HepG2 (cell line): ENCODE measurements at regions of chr20 and their contacts with region 1.

Region 1: DNA sequence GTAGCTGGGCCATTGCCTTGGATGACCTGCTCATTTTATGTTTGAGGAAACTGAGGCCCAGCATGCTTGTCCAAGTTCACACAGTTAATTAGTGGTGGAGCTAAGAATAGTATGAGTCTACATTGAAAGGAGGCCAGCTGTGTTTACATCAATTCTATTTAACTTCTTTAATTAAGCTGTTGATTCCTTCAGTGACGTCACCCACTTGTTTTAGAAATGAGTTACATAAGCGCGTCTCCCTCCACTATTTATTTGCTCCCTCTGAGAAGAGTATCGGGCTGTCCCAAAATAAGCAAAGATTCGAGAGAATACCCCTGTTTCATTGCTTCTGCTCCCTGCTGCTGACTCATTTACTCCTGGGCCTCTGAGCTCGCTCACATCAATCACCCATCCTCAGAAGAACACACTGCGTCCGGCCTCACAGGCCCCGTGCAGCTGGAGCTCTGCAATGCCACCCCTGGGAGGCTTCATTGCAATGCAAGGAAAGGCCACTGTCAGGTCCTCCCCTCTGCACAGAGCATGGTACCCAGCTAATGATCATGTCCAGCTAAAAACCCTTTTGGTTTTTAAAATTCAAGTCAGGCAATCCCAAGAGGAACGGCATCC is 74.8 kb upstream of the BMP2 start:
- DNase-seq: no peak
- ATAC-seq: peak; percentile 78
- H3K4me3 ChIP-seq: no peak overlapping the region
- H3K27ac ChIP-seq: no peak overlapping the region
- H3K4me1 ChIP-seq: peaks cover 46% of the 10 kb centered on the region
- H3K27me3 ChIP-seq: no peaks in the 10 kb centered on the region
- CTCF ChIP-seq: peak; percentile 35
- EP300 ChIP-seq: no peak
- POLR2A ChIP-seq: no peak
- RAD21 ChIP-seq: no peak

Region 2: DNA sequence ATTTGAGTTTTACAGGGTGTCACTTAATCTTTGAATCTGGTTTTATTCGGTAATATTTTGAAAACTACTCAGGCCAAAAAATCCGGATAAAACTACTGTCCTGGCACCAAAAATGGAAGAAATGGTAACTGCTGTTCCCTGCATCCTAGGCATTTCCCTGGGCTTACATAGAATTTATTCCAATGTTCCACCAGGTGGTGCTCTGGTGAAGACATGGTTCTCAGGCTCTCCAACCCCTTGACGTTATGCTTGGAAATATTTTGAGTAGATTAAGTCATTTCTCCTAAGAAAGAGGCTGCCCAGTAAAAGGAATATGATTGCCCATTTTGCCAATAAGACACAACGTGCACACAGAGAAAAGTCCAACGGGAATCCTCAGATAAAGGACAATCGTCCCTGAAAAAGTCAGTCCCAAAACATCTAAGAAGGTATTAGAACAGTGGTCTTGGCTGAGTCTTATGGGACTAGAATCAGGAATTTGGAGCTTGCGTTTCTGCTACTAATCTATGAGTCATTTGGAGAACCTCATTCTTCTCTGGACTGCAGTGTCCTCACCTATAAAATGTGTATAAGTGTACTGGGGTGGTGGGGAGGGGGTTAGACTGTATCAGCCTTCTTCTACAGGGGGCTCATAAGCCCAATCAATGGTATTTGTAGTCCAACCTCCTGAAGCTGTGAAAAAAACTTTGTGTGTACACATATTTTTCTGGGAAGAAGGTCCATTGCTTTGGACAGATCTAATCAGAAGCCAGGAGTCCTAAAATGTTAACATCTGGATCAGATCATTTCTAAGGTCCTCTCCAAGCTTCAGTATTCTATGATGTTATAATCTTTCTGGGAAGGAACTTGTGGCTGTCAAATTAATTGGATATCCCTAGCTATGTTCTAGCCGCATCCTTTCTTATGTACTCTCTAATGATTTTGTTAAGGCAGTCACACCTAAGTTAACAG is 56.2 kb before region 1 on chr20:
- CTCF ChIA-PET with region 1: no interaction called
- POLR2A ChIA-PET with region 1: no interaction called
- in situ Hi-C with region 1: no loop called
- intact Hi-C with region 1: no loop called
- DNase-seq: peak; percentile 63
- ATAC-seq: peak; percentile 96
- H3K4me3 ChIP-seq: no peak overlapping the region
- H3K27ac ChIP-seq: no peak overlapping the region
- H3K4me1 ChIP-seq: no peaks in the 10 kb centered on the region
- H3K27me3 ChIP-seq: no peaks in the 10 kb centered on the region
- CTCF ChIP-seq: peak; percentile 80
- EP300 ChIP-seq: no peak
- POLR2A ChIP-seq: no peak
- RAD21 ChIP-seq: peak; percentile 57; the same call in 1 of the 2 replicates

Region 3: DNA sequence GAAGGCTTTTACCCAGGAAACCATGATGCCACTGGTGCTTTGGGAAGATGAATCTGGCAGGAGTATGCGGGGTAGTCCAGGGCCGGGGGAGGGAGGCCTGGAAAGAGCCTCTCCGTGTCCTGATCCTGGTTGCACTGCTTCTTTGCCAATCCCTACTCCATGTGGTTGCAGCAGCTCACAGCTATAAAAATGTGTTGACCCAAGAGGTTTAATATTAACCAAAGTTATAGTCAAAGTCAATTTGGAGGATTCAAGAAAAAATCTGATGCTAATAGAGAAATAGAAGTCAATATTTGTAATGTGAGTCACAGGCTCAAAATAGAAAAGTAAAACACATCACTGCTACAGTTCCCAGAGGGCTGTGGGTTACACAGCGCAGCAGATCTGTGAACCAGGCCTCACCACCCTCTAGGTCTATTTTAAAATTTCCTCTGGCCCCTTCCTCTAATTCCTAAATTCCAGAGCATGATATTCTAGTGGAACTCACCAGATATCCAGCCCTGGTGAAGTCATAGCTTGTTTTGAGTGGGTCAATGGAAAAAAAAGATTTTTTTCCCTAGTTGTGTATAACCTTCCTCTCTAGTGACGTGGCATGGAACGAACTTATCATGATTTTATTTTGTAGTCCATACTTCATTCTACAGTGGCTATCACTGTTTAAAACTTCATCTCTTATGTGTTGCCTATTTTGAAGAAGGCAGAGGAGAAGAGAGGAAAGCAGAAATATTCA is 11.6 kb after region 1 on chr20:
- CTCF ChIA-PET with region 1: no interaction called
- POLR2A ChIA-PET with region 1: interaction called, 16 read pairs
- in situ Hi-C with region 1: no loop called
- intact Hi-C with region 1: no loop called
- DNase-seq: peak; percentile 85
- ATAC-seq: peak; percentile 92
- H3K4me3 ChIP-seq: peak overlapping the region in 1 of 3 experiments; percentile 5; a peak in 2 of 6 replicates
- H3K27ac ChIP-seq: peak overlapping the region; percentile 12
- H3K4me1 ChIP-seq: peaks cover 57% of the 10 kb centered on the region
- H3K27me3 ChIP-seq: no peaks in the 10 kb centered on the region
- CTCF ChIP-seq: no peak
- EP300 ChIP-seq: peak in 1 of 2 experiments; percentile 83; a peak in 2 of 4 replicates
- POLR2A ChIP-seq: peak in 1 of 2 experiments; percentile 63; a peak in 1 of 4 replicates
- RAD21 ChIP-seq: no peak